HEK293 (cell line): ENCODE measurements at regions of chr5 and their contacts with region 1.

Region 1: DNA sequence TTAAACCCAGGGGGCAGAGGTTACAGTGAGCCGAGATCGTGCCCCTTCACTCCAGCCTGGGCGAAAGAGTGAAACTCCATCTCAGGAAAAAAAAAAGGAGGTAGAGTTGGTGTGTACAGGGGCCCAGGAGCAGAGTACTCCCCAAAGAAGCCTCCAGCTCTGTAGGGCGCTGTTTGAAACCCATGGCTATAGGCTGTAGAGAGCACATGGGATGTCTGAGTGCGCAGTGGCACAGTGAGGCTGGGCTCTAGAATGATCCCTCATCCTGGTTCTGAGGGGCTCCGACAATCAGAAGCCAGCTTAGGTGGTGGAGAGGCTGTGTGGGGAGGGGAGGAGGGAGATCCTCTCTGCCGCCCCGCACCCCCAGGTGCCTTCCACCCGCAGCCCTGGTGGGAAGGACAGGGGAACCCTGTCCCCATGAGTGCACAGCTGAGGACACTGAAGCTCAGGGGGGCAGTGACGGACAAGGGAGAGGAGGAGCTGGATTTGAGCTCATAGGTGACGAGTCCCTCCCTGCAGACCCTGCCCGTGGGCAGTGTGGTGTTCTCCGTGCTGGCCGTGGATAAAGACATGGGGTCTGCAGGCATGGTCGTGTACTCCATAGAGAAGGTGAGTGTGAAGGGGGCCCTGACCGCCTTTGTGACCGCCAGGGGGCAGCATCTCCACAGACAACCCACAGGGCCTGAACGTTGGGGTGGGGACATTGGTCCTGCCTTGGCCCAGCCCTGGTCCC is 24.6 kb downstream of the CDHR2 start:
- H3K4me3 ChIP-seq: no peak overlapping the region
- H3K27ac ChIP-seq: no peak overlapping the region
- H3K4me1 ChIP-seq: no peaks in the 10 kb centered on the region
- CTCF ChIP-seq: peak; percentile 82

Region 2: DNA sequence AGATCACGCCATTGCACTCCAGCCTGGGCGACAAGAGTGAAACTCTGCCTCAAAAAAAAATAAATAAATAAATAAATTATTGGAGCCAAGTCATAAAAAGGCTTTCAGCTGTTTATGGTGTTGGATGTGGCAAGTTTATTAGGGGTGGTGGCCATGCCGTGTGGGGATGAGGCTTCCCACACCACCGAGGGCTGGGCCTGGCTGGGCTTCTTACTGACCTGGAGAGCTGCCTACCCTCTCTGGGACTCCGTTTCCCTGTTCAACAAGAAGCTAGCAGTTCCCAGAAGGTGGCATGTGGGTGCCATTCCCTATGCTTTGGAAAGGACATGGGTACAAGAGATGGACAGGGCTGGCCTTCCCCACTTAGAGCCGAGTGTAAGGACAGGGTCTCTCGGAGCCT is 13.7 kb after region 1 on chr5:
- CTCF ChIA-PET with region 1: interaction called, 12 read pairs
- POLR2A ChIA-PET with region 1: no interaction called
- H3K4me3 ChIP-seq: no peak overlapping the region
- H3K27ac ChIP-seq: no peak overlapping the region
- H3K4me1 ChIP-seq: no peaks in the 10 kb centered on the region
- CTCF ChIP-seq: no peak

Region 3: DNA sequence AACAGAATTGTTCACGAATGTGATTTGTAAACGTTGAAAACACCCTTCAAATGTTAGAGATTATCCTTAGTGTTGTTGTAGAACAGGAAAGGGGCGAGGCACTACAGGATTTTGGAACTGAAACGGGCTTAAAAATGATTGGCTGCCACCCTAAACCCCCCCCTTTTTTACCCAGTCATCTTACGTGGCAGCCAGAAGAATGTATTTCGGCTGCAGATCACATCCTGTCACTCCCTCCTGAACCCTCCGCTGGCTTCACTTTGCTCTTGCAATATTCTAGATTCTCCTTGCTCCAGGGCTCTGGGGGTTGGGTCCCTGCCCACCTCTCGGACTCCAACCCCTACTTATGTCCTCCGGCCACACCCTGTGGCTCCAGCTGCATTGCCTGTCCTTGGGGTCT is 222.7 kb after region 1 on chr5:
- CTCF ChIA-PET with region 1: no interaction called
- POLR2A ChIA-PET with region 1: no interaction called
- H3K4me3 ChIP-seq: no peak overlapping the region
- H3K27ac ChIP-seq: no peak overlapping the region
- H3K4me1 ChIP-seq: no peaks in the 10 kb centered on the region
- CTCF ChIP-seq: no peak